Sigmoid colon (tissue), 7 donors: ENCODE measurements at regions of chr3 and their contacts with region 1.

Region 1: DNA sequence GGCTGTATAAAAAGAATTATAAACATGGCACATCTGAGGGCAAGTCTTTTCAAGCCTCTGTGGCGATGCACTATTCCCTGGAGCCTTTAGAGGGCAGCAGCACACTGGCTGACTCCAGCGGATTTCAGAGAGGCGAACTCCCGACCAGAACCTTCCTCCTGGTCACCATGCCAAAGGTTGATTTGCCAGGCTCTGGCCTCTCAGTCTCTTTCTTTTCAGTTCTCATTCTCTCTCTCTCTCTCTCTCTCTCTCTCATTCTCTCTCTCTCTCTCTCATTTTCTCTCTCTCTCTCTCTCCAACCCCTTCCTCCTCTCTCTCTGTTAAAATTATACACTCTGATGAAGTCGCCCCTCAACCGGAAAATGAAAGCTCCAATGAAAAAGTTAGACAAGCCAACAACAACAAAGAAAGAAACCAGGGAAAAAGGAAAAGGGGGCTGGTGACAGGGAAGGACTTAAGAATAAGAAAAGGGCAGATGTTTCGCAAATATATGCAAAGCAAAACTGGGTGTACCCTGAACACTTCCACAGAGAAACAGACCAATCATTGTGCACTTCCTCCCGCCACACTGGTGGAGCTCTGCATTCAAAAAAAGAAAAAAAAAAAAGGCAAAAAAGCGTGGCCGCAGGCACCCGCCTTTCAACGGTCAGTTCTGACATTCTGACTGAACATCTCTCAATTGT is 90.2 kb downstream of the TIGIT start:
- DNase-seq: peak; percentile 92
- H3K4me3 ChIP-seq: peak overlapping the region; percentile 28 to 47 (median 44)
- H3K27ac ChIP-seq: peak overlapping the region; percentile 74 to 80 (median 77)
- H3K4me1 ChIP-seq: peaks cover 0 to 44% (median 33%) of the 10 kb centered on the region in 4 donors
- H3K27me3 ChIP-seq: no peaks in the 10 kb centered on the region
- CTCF ChIP-seq: peak; percentile 73 to 93 (median 86)
- EP300 ChIP-seq: no peak
- POLR2A ChIP-seq: no peak

Region 2: DNA sequence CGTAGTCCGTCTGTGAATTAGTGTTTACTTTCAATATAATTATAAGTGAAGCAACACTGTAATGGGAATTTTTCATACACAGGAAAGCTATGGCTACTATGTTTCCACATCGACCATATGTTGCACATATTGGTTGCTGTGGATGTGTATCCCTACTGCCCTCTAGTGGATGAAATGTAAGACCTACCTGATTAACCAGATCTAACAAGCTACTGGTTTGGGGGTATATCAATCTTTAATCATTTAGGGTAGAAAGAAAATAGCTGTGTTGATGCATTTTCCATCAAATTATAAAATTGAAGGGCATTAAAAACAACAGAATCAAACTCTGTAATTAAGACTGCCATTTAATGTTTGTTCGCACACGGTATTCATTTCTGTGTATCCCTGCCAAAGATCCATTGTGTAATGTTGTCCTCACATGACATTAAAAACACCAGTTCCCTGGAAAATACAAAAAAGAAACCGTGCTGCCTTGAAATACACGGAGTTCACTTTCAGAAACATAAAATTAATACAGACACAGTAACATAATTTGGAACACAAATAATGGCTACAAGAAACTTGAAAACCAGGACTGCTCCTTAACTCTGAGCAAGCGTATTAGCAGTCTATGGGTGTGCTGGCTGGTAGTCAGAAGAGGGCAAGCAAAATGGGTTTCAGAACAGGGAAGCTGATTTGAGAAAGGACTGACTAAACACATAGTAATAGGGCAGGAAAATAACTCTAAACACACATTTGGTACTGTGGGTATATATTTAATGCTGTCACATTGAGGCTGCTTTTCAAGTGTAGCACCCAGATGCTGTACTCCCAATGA is 34.9 kb after region 1 on chr3:
- intact Hi-C with region 1: loop called (anchors 5 kb)
- DNase-seq: no peak
- H3K4me3 ChIP-seq: no peak overlapping the region
- H3K27ac ChIP-seq: peak overlapping the region; percentile 23 to 70 (median 67)
- H3K4me1 ChIP-seq: peaks cover 0 to 34% (median 11%) of the 10 kb centered on the region in 4 donors
- H3K27me3 ChIP-seq: no peaks in the 10 kb centered on the region
- CTCF ChIP-seq: peak; percentile 81 to 95 (median 87)
- EP300 ChIP-seq: no peak
- POLR2A ChIP-seq: no peak

Region 3: GRCh38 chr3:114454551-114455251 is 70.7 kb after region 1 on chr3:
- intact Hi-C with region 1: loop called (anchors 5 kb)
- DNase-seq: no peak
- H3K4me3 ChIP-seq: peak overlapping the region; percentile 20 to 55 (median 46)
- H3K27ac ChIP-seq: peak overlapping the region; percentile 33 to 72 (median 52)
- H3K4me1 ChIP-seq: peaks cover 0 to 42% (median 18%) of the 10 kb centered on the region in 4 donors
- H3K27me3 ChIP-seq: no peaks in the 10 kb centered on the region
- CTCF ChIP-seq: peak in 2 of 4 experiments; percentile 5 to 30
- EP300 ChIP-seq: no peak
- POLR2A ChIP-seq: no peak

Region 4: DNA sequence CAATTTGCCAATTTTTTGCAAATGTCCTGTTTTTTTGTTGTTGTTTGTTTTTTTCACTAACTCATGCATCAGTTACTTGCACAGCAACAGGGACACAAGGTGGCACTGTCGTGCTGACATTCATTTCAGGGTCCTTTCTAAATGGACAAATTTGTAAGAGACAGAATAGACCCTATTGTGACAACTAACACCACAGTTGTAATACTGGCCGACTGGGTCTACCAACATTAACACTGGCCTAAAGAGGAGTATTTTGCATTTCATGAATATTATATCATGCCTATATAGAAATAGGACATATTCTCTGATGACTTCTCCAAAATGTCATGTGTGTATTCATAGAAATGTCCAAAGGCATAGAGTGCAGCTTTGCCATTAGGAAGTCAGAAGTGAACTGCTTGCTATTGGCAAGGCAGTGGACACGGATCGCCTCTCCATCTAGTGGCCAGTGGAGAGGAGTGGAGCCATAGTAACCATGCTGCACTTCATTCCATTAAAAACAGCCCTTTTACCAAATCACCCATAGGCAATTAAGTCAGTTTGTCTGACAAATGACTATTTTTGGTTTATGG is 708.3 kb after region 1 on chr3:
- intact Hi-C with region 1: loop called (anchors 5 kb)
- DNase-seq: peak; percentile 84
- H3K4me3 ChIP-seq: no peak overlapping the region
- H3K27ac ChIP-seq: peak overlapping the region in 1 of 4 donors; percentile 27
- H3K4me1 ChIP-seq: peaks cover 0 to 44% (median 19%) of the 10 kb centered on the region in 4 donors
- H3K27me3 ChIP-seq: no peaks in the 10 kb centered on the region
- CTCF ChIP-seq: peak; percentile 65 to 84 (median 74)
- EP300 ChIP-seq: no peak
- POLR2A ChIP-seq: no peak

Region 5: DNA sequence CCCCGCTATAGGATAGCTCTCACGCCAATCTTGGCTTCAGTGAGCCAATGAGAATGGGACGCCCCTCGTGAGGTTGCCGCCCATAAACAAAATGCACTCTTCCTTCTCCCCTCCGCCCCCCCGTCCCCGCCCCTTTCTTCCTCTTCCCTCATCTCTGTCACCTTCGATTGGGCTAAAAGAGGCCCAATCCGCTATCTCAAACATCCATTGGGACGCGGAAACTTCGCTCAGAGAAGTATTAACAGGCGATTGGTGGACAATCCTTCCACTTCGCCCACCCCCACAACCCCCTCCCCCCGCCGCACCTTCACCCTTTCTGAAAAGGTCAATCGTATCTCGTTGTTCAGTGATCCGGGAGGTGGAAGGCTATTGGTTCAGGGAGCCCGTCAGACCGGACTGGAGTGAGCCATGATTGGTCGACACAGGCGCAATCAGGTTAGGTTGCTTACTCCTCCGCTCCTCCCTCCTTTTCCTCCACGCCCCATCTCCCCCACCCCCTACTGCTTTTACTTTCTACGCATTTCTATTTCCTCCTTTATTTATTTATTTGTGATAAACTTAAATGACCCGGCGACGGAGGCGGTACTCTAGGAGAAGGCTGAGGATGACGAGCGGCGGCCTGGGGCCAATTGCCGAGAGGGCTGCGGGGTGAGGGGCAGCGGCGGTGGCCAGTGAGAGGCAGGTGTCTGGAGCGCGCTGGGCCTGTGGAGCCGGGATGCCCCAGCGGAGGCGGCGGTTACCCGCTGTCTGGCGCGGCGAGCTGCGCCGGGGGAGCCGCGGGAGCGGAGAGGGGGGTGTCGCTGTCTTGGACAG is 763.5 kb after region 1 on chr3:
- intact Hi-C with region 1: loop called (anchors 10 kb)
- DNase-seq: peak; percentile 100
- H3K4me3 ChIP-seq: peak overlapping the region; percentile 84 to 94 (median 92)
- H3K27ac ChIP-seq: peak overlapping the region; percentile 98 to 99 (median 99)
- H3K4me1 ChIP-seq: peaks cover 0 to 29% (median 19%) of the 10 kb centered on the region in 4 donors
- H3K27me3 ChIP-seq: no peaks in the 10 kb centered on the region
- CTCF ChIP-seq: no peak
- EP300 ChIP-seq: peak in 1 of 4 donors; percentile 22
- POLR2A ChIP-seq: peak; percentile 76 to 87